Aorta (tissue), 5 donors: ENCODE measurements at regions of chr15 and their contacts with region 1.

Region 1: DNA sequence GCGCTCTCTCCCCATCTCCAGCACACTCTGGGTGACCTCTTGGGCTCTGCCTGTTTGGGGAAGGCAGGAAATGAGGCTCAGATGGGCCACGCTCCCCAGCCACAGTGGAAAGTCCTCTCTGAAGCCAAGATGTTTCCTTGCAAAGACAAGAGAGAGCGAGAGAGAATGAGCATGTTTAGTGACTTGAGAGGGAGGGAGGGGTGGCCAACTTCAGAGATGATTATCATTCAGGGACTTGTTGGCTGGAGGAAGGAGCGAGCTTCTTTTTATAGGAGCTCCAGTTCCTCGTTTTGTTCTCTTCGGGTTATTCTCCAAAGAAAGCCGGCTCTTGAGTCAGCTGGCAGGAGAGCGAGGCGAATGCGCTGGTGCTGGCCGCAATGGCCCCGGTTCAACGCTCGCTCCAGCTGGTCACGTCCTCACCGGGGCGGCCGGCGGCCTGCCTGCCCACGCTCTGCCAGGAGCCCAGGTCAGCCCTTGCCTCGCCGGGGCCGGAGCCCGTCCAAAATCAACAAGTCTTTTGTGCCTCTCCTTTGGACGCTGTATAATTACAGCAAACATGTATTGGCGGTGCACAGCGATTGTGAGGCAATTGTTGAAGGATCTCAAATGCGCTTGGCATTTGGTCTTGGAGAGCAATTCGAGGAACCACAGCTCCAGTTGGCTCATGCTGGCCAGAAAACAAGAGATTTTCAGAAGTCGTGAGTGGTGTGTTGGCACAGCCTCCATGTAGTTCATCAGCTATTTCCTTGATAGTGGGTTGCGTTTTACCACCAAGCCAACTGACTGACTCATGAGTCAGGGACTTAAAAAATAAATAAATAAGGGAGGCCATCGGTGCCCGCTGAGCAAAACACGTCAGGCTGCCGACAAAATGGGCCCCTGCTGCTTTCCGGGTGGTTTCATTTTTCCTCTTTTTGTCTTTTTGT is 288.6 kb downstream of the UACA start:
- DNase-seq: peak; percentile 96
- ATAC-seq: peak; percentile 92
- H3K4me3 ChIP-seq: no peak overlapping the region
- H3K27ac ChIP-seq: peak overlapping the region; percentile 78 to 97
- H3K4me1 ChIP-seq: peaks cover 0 to 1% of the 10 kb centered on the region in 2 donors
- H3K27me3 ChIP-seq: no peaks in the 10 kb centered on the region

Region 2: GRCh38 chr15:69576035-69576526 is 898.7 kb before region 1 on chr15:
- intact Hi-C with region 1: loop called in 1 of 2 experiments (anchors 10 kb)
- DNase-seq: peak; percentile 79 to 86
- ATAC-seq: peak; percentile 79
- H3K4me3 ChIP-seq: no peak overlapping the region
- H3K27ac ChIP-seq: no peak overlapping the region
- H3K4me1 ChIP-seq: no peaks in the 10 kb centered on the region
- H3K27me3 ChIP-seq: no peaks in the 10 kb centered on the region

Region 3: DNA sequence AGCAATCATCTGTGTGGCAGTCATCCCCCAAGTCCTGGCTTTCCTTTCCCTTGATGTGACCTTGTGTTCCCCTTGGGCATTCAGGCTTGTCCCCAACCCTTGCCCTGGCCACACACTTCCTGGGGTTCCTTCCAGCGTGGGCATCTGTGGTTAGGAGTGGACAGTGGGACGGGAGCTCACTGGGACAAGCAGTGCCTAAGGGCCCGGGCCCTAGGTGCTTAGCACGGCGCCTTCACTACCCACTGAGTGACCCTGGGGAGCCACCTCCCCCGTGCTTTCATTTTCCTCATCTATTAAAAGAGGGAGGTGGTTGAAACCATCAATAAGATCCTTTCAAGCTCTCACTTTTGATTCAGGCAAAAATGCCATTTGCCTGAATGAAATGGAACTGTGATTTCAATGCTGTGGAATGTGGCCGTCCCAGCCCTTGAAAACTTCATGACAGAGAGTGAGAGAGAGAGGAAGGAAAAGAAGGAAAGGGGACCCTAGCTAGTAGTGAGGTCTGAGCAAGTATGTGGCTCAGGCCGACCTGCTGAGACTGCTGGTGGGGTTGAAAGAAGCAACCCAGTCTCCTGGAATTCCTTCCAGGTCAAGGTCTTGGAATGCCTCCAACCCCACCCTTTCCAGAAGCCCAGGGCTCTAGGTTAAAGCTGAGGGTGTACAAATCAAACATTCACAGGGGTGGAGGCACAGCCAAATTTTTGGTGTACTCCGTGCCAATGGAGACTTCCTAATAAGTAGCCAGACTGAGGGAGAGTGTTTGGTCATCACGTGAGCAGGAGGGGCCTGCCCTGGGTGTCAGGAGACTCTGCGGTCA is 679.9 kb before region 1 on chr15:
- intact Hi-C with region 1: loop called in 1 of 2 experiments (anchors 10 kb)
- DNase-seq: peak; percentile 68 to 84
- ATAC-seq: peak; percentile 79
- H3K4me3 ChIP-seq: no peak overlapping the region
- H3K27ac ChIP-seq: peak overlapping the region; percentile 98 to 100
- H3K4me1 ChIP-seq: no peaks in the 10 kb centered on the region
- H3K27me3 ChIP-seq: no peaks in the 10 kb centered on the region

Region 4: DNA sequence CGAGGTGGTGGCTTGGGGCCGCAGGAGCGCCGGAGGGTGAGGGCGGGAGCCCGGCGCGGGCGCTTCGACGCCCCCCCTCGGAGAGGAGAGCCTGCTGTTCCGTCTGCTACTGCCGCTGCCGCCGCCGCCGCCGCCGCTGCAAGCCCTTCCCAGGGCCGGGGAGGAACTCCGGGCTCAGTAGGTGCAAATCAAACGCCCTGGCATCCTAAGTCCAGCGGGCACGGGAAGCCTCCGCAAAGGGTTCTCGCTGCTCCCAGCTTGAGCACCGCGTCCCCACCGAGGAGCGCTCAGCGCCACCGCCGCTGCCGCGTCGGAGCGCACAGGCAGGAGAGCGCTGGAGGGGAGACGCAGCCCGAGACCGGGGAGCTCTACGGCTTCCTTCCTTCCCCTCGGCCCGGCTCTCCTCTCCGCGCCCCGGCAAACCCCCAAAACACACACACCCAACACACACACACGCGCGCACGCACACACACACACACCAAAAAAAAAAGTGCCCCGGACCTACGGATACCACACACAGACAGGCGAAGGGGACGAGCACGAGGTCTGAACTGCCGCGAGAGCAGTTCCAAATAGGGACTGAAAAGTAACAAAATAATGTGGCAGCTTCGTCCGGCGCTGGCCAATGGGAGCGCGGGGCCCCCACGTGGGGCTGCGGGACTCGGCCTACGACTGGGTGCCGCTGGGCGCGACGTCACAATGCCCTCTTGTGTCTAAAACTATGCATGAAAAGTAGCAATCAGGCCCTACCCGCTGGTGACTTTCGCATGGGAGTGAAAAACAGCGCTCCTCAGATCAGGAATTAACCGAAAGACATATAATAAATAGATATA is 377.2 kb before region 1 on chr15 and contains the start of gene TLE3:
- intact Hi-C with region 1: loop called (anchors 2 to 10 kb)
- DNase-seq: peak; percentile 99
- ATAC-seq: peak; percentile 83
- H3K4me3 ChIP-seq: peak within 1 kb of the TSS; percentile 52 to 75
- H3K27ac ChIP-seq: peak within 1 kb of the TSS; percentile 78 to 88
- H3K4me1 ChIP-seq: peaks cover 0 to 2% of the 10 kb centered on the region in 2 donors
- H3K27me3 ChIP-seq: no peaks in the 10 kb centered on the region
- total RNA-seq, gene TLE3: 43.0 to 89.9 TPM

Region 5: DNA sequence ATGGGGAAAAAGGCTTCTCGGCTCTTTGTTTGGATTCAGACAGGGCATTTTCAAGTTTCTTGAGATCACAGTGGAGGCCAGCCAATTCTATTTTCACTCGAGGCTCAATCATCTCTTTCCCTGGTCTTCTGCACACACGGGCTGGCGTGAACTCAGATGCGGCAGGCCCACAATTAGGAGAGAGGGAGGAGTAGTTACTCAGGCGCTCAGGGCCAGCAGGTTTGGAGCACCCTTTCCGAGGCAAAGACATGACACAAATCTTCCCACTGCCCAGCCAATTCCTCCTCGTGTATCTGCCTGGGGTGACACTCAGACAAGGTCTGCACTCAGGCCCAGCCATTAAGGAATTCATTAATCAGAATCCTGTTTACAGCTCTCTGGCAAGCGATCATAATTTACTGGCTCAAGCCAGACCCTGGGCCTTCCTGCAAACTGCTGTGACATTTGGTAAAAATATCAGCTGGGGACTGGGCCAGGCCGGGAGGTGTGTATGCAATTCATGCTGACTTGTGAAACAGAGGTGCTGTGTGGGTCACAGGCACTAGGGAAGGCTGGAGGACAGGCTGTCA is 308.9 kb before region 1 on chr15:
- intact Hi-C with region 1: loop called in 1 of 2 experiments (anchors 10 kb)
- DNase-seq: peak; percentile 81
- ATAC-seq: peak; percentile 58
- H3K4me3 ChIP-seq: no peak overlapping the region
- H3K27ac ChIP-seq: peak overlapping the region in 1 of 2 donors; percentile 50
- H3K4me1 ChIP-seq: peaks cover 0 to 2% of the 10 kb centered on the region in 2 donors
- H3K27me3 ChIP-seq: no peaks in the 10 kb centered on the region

Region 6: DNA sequence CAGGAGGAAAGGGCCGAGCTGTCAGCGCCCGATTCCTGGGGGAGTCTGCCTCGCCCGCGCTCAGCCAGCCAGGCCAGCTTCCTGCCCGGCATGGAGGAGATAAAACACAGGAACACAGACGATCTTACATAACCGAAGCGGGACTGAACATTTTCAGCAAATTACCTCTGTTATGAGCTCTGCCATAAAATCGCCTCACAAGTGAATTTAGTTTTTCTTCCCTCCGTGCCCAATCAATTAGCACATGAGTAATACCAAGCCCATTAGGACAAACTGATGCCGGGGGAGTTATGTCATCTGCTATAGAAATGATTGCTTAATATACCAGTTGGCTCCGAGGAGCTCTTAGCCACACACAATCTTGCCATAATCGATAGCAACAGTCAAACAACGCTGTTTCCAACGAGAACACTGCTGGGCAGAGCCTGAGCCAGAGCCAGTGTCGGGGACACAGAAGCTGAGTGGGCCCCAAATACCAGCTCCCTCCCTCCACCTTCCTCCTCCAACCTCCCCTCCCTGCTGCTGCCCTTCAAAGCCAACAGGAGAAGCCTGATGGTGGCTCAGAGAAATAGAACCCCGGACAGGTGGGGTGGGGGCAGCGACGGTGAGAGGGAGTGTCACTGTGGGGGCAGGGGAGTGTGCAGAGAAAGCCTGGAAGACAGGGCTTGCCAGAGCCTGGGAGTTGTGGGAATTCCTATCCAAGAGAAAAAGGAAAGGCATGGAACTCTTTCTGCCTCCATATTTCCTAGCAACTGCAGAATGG is 97.6 kb before region 1 on chr15:
- intact Hi-C with region 1: loop called in 1 of 2 experiments (anchors 5 kb)
- DNase-seq: peak; percentile 63 to 83
- ATAC-seq: peak; percentile 74
- H3K4me3 ChIP-seq: peak overlapping the region in 1 of 2 donors; percentile 17
- H3K27ac ChIP-seq: no peak overlapping the region
- H3K4me1 ChIP-seq: no peaks in the 10 kb centered on the region
- H3K27me3 ChIP-seq: no peaks in the 10 kb centered on the region

Region 7: DNA sequence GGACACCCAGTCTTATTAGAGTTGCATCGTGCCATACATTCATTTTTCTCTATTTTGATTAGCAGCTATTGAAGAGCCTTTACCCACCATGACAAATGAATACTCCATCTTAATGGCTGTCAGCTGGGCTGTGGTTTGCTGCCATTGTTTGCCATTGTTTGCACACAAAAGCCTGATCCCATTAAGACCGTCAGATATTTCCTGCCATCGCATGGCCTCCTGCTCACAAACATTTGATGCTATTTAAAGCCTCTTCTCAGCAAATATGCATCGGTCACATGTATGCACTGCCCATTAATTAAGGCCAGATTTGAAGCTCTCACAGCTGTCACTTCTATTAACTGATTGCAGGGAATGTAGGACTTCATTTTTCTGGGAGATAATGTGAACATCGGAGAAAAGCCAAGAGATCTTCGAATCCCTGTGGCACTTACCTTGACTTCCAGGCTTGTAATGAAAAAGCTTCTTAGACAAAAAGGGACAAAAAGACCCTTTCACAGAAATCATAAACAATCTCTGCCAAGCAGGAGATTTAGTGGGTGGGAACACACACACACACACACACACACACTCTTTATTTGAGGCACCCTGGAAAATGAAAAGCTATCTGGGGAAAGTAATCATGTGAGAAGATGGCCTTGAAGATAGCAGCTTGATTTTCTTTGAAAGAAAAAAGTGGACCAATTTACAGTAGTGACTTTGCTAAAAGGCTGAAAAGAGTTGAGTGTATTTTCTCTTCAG is 1160.3 kb after region 1 on chr15:
- intact Hi-C with region 1: no loop called
- DNase-seq: no peak
- ATAC-seq: no peak
- H3K4me3 ChIP-seq: no peak overlapping the region
- H3K27ac ChIP-seq: no peak overlapping the region
- H3K4me1 ChIP-seq: peaks cover 0 to 1% of the 10 kb centered on the region in 2 donors
- H3K27me3 ChIP-seq: no peaks in the 10 kb centered on the region